Right ventricle myocardium superior (tissue), 1 donor: ENCODE measurements at regions of chr3 and their contacts with region 1.

Region 1: DNA sequence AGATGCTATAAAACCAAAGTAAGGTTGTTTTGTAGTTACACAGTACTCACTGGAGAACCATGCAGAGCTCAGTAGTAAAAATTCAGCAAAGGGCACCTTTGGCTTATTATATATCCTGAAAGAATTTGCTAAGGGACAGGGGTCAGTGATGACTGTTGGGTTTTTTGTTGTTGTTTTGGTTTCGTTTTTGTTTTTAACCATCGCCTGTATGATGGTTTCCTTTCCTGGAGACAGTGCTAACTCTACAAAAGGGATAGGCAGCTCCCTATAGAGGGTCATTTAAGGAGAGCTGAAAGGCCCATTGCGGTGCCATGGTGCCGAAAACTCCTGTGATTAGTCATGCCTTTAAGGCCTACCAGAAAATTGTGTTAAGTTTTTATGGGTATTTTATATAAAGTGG is 118.2 kb upstream of the GOLIM4 start:
- DNase-seq: no peak
- ATAC-seq: no peak

Region 2: GRCh38 chr3:168467115-168467714 is 253.3 kb after region 1 on chr3:
- intact Hi-C with region 1: loop called (anchors 2 kb)
- DNase-seq: no peak
- ATAC-seq: peak; percentile 89

Region 3: DNA sequence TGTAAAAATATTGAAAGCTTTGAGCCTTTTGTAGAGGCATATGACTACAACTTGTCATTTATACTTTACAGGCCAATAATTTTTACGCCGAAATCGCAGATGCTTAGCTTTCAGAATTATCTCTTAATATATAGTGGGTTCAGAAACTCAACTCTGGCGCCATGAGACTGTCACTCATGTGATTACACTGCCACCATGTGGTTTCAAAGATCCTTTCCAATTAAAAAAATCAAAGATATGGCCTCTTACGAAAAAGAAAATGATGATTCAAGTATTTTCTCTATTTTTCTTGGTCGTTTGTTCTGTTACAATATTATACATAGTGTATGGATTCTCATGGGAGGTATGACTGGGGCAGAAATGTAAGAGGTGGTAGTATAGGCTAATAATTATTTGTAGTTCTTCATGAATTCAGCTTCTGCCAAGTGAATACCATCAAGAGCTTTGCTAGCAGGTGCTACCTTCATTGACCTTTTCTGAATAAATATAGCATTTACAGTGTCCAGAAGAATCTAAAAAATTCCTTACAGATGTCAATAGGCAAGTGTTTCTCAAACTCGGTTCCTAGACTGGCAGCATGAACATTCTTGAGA is 633.5 kb after region 1 on chr3:
- intact Hi-C with region 1: loop called (anchors 2 kb)
- DNase-seq: no peak
- ATAC-seq: peak; percentile 59